GM18951 (cell line): ENCODE measurements at regions of chr4 and their contacts with region 1.

Region 1: DNA sequence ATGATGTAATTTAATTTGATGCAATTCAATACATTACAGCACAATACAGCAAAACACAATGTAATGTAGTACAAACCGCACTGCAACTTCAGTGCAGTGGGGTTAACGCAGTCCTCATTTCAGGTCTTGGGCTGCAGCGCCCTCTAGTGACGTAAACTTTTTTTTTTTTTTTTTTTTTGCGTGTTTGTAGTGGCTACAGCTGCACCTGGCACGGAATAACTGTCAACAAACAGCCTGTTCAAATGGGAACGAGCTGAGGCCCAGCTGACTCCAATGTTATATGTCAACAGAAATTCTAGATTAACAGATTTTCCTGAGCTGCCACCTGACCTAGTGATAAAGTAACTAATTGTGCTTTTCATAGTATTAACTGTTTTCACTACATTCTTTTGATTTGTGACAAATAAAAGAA is 33.5 kb upstream of the RASSF6 start:
- POLR2A ChIP-seq: no peak

Region 2: DNA sequence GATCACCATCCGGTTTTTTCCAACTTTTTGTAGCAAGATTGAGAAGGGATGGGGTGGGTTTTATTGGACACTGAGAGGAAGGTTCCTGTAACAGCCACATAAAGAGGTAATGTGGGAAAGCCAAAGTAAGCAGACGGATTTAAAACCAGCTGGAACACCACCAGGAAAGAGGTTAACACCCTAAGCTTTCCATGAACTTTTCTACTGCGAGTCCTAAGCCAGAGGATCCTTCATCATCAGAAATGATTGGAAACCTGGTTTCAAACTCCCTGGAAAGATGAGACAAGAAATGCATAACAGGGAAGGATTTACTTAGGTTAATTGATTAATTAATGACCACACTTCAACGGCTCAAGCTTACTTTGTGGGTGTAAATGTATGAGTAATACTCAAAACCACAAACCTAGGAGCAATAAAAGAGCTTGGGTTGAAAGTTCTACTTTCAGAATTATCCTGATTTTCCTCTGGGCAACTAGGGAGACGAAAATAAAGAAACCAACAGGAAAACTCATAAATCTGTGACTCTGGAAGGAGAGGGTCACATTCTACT is 675.7 kb before region 1 on chr4:
- in situ Hi-C with region 1: no loop called
- POLR2A ChIP-seq: no peak

Region 3: DNA sequence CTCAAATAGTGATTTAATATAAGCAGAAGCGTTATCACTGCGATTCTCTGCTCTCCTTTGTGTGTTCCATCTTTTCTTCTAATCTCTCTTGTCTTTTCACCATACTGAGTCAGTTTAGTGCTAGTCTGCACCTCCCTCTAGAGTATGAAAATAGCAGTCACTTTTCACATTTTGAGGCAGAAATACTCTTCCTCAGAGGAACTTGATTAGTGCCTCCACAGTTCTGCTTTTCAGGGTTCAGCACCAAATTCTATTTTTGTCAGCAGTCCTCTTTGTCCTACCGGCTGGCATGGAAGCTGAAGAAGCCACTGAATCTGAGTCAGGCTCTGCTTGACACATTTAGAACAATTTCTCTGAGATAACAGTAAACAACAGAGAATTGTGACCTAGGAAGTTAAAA is 345.4 kb before region 1 on chr4:
- in situ Hi-C with region 1: loop called (anchors 25 kb)
- POLR2A ChIP-seq: no peak

Region 4: GRCh38 chr4:73432169-73433000 is 221.3 kb before region 1 on chr4:
- in situ Hi-C with region 1: no loop called
- POLR2A ChIP-seq: no peak

Region 5: DNA sequence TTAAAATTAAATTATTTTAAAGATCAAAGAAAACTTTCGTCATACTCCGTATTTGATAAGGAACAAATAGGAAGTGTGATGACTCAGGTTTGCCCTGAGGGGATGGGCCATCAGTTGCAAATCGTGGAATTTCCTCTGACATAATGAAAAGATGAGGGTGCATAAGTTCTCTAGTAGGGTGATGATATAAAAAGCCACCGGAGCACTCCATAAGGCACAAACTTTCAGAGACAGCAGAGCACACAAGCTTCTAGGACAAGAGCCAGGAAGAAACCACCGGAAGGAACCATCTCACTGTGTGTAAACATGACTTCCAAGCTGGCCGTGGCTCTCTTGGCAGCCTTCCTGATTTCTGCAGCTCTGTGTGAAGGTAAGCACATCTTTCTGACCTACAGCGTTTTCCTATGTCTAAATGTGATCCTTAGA is 86.7 kb after region 1 on chr4 and contains the start of gene CXCL8:
- in situ Hi-C with region 1: no loop called
- POLR2A ChIP-seq: no peak

Region 6: GRCh38 chr4:73917081-73917501 is 263.4 kb after region 1 on chr4:
- in situ Hi-C with region 1: no loop called
- POLR2A ChIP-seq: no peak